Activated CD8-positive, alpha-beta T cell treated with anti-CD3 and anti-CD28 coated beads, Interleukin-2, amount 10 ng/mL, durations not matched to agents 7 days and 5 days (primary cell): ENCODE measurements at regions of chr16 and their contacts with region 1.

Region 1: DNA sequence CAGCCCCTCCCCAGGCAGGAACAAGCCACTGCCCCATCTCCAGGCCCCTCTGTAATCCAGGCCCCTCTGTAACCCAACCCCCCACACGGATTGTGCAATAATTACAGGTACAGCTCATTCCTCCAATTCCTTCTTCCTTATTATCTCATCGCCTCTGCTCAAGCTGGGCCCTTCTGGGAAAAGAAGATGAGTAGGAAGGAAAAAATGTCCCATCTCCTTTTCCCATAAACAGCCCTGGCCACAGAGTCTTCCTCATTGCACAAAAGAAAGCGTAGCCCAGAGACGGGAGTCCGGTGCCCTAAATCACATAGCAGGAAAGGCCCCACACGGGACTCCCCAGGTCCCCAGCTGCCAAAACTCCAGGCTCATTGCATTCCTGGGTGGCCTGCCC is 3.6 kb upstream of the LITAFD start:
- DNase-seq: no peak
- ATAC-seq: no peak
- H3K4me3 Mint-ChIP-seq: no peak overlapping the region
- H3K27ac Mint-ChIP-seq: no peak overlapping the region
- H3K4me1 Mint-ChIP-seq: peaks cover 31% of the 10 kb centered on the region
- H3K27me3 Mint-ChIP-seq: no peaks in the 10 kb centered on the region

Region 2: DNA sequence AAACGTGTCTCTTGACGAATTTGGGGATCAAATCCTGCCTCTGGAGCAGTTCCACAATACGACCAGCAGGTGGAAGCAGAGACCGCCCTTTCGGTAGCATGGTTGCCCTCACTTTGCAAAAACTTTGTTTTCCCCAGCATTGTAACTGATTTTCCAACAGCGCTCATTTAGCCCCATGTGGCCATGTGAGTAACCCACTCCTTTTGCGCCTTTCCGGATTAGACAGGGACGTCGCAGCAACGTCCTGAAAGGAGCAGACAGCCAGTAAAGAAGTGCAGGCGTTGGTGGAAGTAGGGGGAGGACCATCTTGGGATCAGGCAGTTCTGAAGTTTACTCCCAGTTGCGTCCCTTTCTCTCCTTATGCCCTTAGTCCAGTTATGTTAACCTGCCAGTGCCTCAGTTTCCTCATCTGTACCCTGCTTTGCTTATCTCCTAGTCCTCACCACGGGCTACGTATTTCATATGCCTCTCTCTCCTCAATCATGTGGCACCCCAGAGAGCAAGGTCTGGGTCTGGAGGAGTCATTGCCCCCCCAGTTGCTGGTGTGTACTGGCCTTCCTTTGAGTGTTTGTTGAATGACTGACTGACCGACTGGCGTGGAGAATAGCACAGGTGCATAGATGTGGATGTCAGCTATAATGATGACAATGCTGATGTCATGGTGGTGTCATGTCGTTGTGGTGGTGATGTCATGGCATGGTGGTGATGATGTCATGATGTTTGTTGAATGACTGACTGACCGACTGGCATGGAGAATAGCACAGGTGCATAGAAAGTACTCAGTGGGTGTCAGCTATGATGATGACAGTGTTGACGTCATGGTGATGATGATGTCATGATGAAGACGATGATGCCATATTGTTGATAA is 310.5 kb before region 1 on chr16:
- CTCF ChIA-PET with region 1: interaction called, 15 read pairs
- POLR2A ChIA-PET with region 1: interaction called, 4 read pairs
- DNase-seq: peak; percentile 87
- ATAC-seq: peak; percentile 95
- H3K4me3 Mint-ChIP-seq: no peak overlapping the region
- H3K27ac Mint-ChIP-seq: peak overlapping the region; percentile 13
- H3K4me1 Mint-ChIP-seq: peaks cover 4% of the 10 kb centered on the region
- H3K27me3 Mint-ChIP-seq: peaks cover 5% of the 10 kb centered on the region

Region 3: GRCh38 chr16:8660841-8661301 is 217.6 kb before region 1 on chr16:
- CTCF ChIA-PET with region 1: interaction called, 10 read pairs
- POLR2A ChIA-PET with region 1: no interaction called
- DNase-seq: peak; percentile 61
- ATAC-seq: peak; percentile 70
- H3K4me3 Mint-ChIP-seq: no peak overlapping the region
- H3K27ac Mint-ChIP-seq: no peak overlapping the region
- H3K4me1 Mint-ChIP-seq: no peaks in the 10 kb centered on the region
- H3K27me3 Mint-ChIP-seq: no peaks in the 10 kb centered on the region

Region 4: DNA sequence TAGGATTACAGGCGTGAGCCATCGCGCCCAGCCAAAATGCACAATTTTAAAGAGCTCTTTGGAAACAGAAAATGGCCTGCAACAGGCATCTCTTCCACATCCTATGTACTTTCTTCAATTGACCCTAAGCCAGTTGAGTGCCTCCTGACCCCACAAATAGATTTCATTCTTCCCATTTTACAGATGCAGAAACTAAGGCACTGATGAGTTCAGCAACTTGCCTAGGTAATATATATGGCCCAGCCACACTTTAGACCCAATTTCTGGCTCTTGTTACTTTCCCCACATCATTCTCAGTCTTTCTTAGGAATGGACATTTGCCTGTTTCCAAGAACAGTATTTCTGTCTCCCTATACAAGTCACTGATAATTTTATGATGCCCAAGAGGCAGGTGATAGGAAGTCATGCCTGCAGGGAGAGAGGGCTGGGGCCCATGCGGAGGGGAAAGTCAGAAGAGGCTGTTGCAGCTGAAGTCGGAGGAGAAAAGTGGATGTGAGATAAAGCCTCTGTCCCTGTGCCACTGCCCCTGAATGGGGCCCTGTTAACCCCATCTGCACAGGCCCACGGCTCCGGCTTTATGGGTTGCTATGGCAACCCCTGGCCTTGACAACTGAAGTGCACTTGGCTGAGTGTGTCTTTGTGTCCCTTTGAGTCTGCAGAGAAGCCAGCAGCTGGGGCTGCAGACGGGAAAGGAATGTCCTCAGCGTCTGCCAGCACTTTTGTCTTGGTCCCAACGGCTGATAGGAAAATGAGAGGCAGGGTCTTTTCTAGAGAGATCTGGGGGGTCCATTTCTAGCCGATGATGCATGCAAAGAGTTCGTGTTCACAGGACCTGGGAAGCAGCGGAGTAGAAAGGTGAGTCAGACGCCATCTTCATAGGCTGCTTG is 158.2 kb before region 1 on chr16:
- CTCF ChIA-PET with region 1: no interaction called
- POLR2A ChIA-PET with region 1: no interaction called
- DNase-seq: no peak
- ATAC-seq: no peak
- H3K4me3 Mint-ChIP-seq: no peak overlapping the region
- H3K27ac Mint-ChIP-seq: no peak overlapping the region
- H3K4me1 Mint-ChIP-seq: no peaks in the 10 kb centered on the region
- H3K27me3 Mint-ChIP-seq: no peaks in the 10 kb centered on the region

Region 5: GRCh38 chr16:8892101-8892575 is 13.6 kb after region 1 on chr16:
- CTCF ChIA-PET with region 1: interaction called, 19 read pairs
- POLR2A ChIA-PET with region 1: no interaction called
- DNase-seq: no peak
- ATAC-seq: no peak
- H3K4me3 Mint-ChIP-seq: no peak overlapping the region
- H3K27ac Mint-ChIP-seq: peak overlapping the region; percentile 49
- H3K4me1 Mint-ChIP-seq: no peaks in the 10 kb centered on the region
- H3K27me3 Mint-ChIP-seq: no peaks in the 10 kb centered on the region

Region 6: DNA sequence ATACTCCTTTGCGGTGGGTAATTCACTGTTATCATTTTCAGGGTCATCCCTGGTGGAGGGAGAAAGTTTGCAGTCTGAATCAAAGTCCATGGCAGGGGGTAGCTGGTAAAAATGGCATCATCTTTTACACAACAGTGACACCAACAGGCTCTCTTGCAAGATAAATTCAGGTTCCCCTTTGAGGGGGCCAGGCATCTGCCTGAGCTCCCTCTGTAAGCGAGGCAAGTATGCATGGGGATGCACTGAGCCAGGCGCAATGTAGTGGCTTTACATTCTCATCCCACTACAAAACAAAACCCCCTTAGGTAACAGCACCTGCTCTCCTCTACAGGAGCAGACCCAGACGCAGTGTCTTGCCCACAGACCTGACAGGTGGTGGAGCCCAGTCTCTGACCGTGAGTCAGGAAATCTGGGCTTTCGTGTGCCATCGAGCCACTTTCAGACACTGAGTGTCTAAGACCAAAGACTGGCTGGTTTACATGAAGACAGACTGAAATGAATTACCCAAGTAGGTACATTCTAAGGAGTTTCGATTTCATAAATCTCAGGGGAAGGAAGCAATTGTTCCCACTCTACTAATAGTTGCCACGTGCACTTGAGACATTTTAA is 21.3 kb after region 1 on chr16:
- CTCF ChIA-PET with region 1: interaction called, 11 read pairs
- POLR2A ChIA-PET with region 1: no interaction called
- DNase-seq: no peak
- ATAC-seq: no peak
- H3K4me3 Mint-ChIP-seq: no peak overlapping the region
- H3K27ac Mint-ChIP-seq: no peak overlapping the region
- H3K4me1 Mint-ChIP-seq: no peaks in the 10 kb centered on the region
- H3K27me3 Mint-ChIP-seq: no peaks in the 10 kb centered on the region

Region 7: DNA sequence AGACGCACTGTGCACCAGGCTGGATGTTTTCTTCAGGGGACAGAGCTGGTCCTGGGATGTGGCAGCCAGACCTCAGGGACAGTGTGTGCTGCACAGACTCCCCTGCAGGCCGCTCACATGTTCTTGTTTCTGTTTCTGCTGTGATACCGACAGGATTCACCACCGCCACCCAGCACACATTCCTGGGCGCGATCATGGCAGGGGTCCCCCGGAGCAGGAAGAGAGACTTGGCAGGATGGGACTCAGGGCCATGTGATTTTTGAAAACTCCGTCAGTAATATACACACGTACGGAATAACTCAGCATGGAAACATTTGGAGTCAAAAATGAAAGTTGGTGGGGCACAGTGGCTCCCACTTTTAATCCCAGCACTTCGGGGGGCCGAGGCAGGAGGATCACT is 292.0 kb after region 1 on chr16:
- CTCF ChIA-PET with region 1: no interaction called
- POLR2A ChIA-PET with region 1: no interaction called
- DNase-seq: no peak
- ATAC-seq: no peak
- H3K4me3 Mint-ChIP-seq: no peak overlapping the region
- H3K27ac Mint-ChIP-seq: no peak overlapping the region
- H3K4me1 Mint-ChIP-seq: no peaks in the 10 kb centered on the region
- H3K27me3 Mint-ChIP-seq: no peaks in the 10 kb centered on the region